Tibial artery (tissue), 4 donors: ENCODE measurements at regions of chr14 and their contacts with region 1.

Region 1: DNA sequence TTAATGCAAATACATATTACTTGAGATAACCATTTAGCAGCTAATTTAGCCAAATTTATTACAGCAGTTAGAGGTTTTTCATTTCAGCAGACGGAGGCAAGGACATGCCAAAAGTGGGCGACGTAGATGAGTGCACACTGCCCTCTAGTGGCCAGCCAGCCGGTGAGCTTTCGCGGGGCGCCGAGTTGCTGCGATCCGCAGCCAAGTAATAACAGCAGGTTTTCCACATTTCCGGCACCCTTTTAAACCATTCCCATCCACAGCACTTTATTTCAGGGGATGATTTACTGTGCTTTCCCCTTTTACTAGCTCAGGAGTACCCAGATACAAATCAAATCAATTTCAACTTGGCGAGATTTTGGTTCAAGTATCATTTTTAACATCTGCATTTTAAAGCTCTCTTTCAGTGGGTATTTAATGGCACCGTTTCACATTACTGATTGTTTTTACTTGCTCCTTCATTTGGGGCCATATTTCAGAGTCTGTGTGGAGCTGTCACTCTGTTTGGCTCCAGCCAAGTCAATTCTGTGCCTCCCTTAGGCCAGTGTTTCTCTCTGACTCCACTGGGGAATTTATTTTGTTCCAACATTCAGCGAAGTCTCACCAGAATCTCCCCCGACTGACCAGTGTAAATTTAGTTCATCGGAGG is 158.0 kb downstream of the EGLN3 start:
- DNase-seq: peak; percentile 75 to 88
- H3K4me3 ChIP-seq: peak overlapping the region; percentile 29 to 35
- H3K27ac ChIP-seq: peak overlapping the region; percentile 63 to 66
- H3K4me1 ChIP-seq: peaks cover 0 to 22% (median 17%) of the 10 kb centered on the region in 4 donors
- H3K27me3 ChIP-seq: no peaks in the 10 kb centered on the region
- CTCF ChIP-seq: peak; percentile 88 to 94

Region 2: DNA sequence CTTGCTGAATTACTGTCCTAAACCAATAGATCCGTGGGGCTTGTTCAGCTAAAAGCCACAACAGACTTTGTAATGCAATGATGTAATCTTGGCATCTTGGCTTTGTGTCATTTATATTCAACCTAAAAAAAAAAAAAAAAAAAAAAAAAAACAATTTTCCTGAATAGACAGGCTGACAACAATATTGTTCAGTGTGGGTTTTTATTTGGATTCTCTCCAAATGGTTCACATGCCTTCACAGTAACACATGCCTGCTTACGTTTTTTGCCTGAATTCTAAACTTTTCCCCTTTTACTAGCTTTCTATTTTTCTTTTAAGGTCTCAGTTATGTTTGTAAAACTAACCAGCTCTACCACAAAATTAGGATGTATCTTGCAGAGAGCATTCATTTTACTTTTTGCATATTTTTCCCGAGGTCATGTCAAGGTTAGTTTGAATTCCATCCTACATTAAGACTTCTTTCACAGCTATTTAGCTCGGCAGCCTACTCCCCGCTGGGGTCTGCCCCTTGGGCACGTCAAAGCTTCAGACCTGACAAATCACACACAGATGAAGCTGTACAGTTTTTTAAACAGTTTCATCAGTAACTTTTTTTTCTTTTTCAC is 1067.9 kb before region 1 on chr14:
- intact Hi-C with region 1: loop called (anchors 5 kb)
- DNase-seq: no peak
- H3K4me3 ChIP-seq: peak overlapping the region; percentile 23 to 41
- H3K27ac ChIP-seq: peak overlapping the region; percentile 49 to 54
- H3K4me1 ChIP-seq: peaks cover 0 to 41% (median 9%) of the 10 kb centered on the region in 4 donors
- H3K27me3 ChIP-seq: no peaks in the 10 kb centered on the region
- CTCF ChIP-seq: no peak

Region 3: DNA sequence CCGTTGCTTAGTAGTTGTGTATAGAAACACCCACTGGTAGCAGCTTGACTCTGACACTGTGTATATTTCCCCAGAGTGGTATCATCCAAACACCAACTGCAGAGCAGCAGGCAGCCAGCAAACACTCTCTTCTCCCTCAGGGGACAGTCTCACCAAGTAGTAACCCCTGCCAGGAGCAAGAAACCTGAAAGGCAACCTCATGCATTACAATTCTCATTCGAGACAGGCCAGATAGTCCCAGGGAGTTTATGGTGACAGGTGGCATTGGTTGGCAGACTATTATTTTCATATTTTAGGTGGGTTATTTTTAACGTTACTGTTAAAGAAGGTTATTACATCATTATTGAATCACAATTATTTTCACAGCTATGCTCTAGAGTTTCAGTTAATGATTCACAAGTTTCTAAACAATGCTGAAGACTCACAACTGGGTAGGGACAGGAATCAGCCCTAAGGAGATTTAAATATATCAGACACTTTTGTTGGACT is 64.8 kb before region 1 on chr14:
- intact Hi-C with region 1: no loop called
- DNase-seq: no peak
- H3K4me3 ChIP-seq: no peak overlapping the region
- H3K27ac ChIP-seq: no peak overlapping the region
- H3K4me1 ChIP-seq: no peaks in the 10 kb centered on the region
- H3K27me3 ChIP-seq: no peaks in the 10 kb centered on the region
- CTCF ChIP-seq: no peak